OCI-LY7 (cell line): ENCODE measurements at regions of chr12 and their contacts with region 1.

Region 1: GRCh38 chr12:66624806-66625205 is 54.1 kb downstream of the GRIP1 start:
- DNase-seq: peak; percentile 73
- H3K4me3 ChIP-seq: peak overlapping the region; percentile 46
- H3K27ac ChIP-seq: peak overlapping the region; percentile 100
- H3K4me1 ChIP-seq: peaks cover 94% of the 10 kb centered on the region
- CTCF ChIP-seq: no peak

Region 2: GRCh38 chr12:66603458-66603857 is 21.3 kb before region 1 on chr12:
- CTCF ChIA-PET with region 1: interaction called, 3 read pairs
- POLR2A ChIA-PET with region 1: interaction called, 12 read pairs
- intact Hi-C with region 1: no loop called
- DNase-seq: no peak
- H3K4me3 ChIP-seq: no peak overlapping the region
- H3K27ac ChIP-seq: no peak overlapping the region
- H3K4me1 ChIP-seq: peaks cover 57% of the 10 kb centered on the region
- CTCF ChIP-seq: no peak

Region 3: DNA sequence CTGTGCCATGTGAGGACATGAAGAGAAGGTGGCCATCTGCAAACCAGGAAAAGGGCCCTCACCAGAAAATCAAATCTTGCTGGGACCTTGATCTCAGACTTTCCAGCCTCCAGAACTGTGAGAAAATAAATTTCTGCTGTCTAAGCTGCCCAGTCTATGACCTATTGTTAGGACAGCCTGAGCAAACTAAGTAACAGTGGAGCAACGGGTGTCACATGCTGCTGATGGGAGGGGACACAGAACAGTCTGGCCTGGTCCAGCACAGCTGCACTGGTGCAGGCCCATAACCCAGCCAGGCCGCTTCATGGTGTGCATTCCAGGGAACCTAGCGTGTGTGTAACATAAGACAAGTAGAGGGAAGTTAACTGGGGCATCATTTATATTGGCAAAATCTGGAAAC is 12.0 kb after region 1 on chr12:
- CTCF ChIA-PET with region 1: no interaction called
- POLR2A ChIA-PET with region 1: interaction called, 53 read pairs
- intact Hi-C with region 1: no loop called
- DNase-seq: no peak
- H3K4me3 ChIP-seq: no peak overlapping the region
- H3K27ac ChIP-seq: no peak overlapping the region
- H3K4me1 ChIP-seq: peaks cover 8% of the 10 kb centered on the region
- CTCF ChIP-seq: no peak

Region 4: DNA sequence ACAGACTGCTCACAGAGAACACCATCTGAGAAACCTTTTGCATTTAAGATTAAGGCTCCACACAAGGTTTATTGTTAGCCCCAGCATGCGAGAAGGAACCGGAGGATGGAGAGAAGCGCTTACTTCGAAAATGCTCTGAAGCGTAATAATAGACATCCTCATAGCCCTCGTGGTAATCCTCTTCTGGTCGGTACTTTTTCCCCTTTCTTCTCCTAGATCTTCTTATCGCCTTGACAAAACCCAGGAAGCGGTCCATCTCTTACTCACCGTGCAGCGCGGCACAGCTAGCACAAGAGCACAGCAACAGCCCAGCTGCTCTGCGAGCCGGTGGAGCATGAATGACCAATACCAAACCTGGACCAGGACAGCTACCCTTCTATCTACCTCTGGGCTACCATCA is 179.1 kb after region 1 on chr12:
- CTCF ChIA-PET with region 1: no interaction called
- POLR2A ChIA-PET with region 1: no interaction called
- intact Hi-C with region 1: no loop called
- DNase-seq: no peak
- H3K4me3 ChIP-seq: no peak overlapping the region
- H3K27ac ChIP-seq: no peak overlapping the region
- H3K4me1 ChIP-seq: no peaks in the 10 kb centered on the region
- CTCF ChIP-seq: no peak

Region 5: DNA sequence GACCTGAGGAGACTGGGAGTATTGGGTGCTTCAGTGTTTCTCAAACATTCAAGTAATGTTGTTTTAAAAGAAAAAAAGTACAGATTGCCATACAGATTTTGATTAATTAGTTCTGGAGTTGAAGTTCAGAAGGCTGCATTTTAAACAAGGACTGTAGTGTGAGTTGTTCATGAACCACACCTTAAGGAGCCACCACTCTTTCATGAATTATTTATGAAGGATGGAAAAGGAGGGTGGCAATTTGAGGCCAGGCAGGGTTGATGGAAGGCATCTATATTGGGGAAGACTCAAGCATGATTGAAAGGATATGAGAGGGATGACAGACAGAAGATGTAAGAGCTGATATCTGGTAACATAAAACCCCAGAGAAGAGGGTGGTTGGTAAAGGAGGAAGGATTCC is 497.8 kb after region 1 on chr12:
- CTCF ChIA-PET with region 1: no interaction called
- POLR2A ChIA-PET with region 1: no interaction called
- intact Hi-C with region 1: no loop called
- DNase-seq: no peak
- H3K4me3 ChIP-seq: no peak overlapping the region
- H3K27ac ChIP-seq: no peak overlapping the region
- H3K4me1 ChIP-seq: no peaks in the 10 kb centered on the region
- CTCF ChIP-seq: no peak